GM10248 (cell line): ENCODE measurements at regions of chr9 and their contacts with region 1.

Region 1: GRCh38 chr9:117624106-117624505 is 80.1 kb upstream of the TLR4 start:
- DNase-seq: no peak
- CTCF ChIP-seq: no peak

Region 2: DNA sequence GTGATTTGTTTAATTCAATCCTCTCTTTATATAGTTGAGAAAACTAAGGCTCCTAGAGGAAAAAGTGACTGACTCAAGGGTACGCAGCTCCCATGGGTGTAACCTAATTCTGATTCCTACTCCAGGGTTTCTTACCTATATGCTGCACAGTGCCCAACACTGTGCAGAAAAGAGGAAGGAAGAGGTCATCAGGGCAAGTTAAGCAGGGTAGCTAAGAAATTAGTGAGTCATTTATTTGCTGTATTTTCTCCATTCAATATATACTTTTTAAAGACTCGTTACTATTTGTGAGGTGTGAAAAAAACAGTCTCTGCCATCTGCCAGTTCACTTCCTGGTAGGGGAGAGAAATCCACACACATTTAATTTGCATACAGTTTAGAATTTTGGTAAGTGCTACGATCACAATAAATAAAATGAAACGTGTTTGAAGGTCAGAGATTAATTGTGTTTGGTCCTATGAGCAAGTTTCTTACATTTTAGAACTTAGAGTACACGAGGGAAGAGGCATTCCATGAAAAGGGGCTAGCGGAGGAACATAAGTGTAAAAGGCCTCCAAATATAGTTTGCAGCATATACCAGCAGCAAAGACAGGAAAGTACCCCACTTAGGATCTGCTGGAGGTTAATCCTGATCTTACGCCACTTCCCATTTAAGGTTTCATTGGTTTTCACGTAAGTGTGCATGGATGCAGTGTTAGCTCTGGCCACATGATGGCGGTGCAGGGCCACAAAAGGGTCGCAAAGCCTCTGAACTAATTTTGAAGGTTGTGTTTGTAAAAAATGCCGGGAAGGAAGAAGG is 20.2 kb after region 1 on chr9:
- CTCF ChIA-PET with region 1: interaction called, 11 read pairs
- POLR2A ChIA-PET with region 1: no interaction called
- DNase-seq: peak; percentile 54
- CTCF ChIP-seq: peak; percentile 96